CD8-positive, alpha-beta T cell (primary cell): ENCODE measurements at regions of chr9 and their contacts with region 1.

Region 1: GRCh38 chr9:5886114-5886939 is 4.4 kb upstream of the MLANA start:
- DNase-seq: peak; percentile 57 to 87 (median 81)
- ATAC-seq: peak; percentile 96
- H3K4me3 ChIP-seq: no peak overlapping the region
- H3K4me3 Mint-ChIP-seq: no peak overlapping the region
- H3K27ac ChIP-seq: no peak overlapping the region
- H3K27ac Mint-ChIP-seq: no peak overlapping the region
- H3K4me1 ChIP-seq: peaks cover 10% of the 10 kb centered on the region
- H3K4me1 Mint-ChIP-seq: peaks cover 8% of the 10 kb centered on the region
- H3K27me3 ChIP-seq: no peaks in the 10 kb centered on the region
- H3K27me3 Mint-ChIP-seq: no peaks in the 10 kb centered on the region
- CTCF ChIP-seq: peak; percentile 86

Region 2: DNA sequence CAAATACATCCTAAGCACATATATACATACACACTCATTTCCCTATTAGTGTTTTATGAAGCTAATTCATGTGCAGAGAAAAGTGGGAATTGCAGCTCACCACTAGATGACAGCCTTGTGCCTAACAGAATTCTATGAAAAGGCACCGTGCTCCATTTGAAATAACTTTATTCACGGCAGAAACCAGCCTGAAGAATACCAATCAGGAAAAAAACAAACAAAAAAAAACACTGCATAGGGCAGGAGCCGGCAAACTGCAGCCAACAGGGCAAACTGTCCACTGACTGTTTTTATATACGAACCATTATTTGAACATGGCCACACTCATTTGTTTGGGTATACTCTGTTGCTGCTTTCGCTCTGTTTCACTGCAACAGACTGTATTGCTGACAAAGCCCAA is 87.0 kb before region 1 on chr9:
- CTCF ChIA-PET with region 1: interaction called, 9 read pairs
- POLR2A ChIA-PET with region 1: no interaction called
- intact Hi-C with region 1: loop called in 1 of 2 experiments (anchors 1 kb)
- DNase-seq: peak in 2 of 9 experiments; percentile 29 to 46
- ATAC-seq: no peak
- H3K4me3 ChIP-seq: no peak overlapping the region
- H3K4me3 Mint-ChIP-seq: no peak overlapping the region
- H3K27ac ChIP-seq: no peak overlapping the region
- H3K27ac Mint-ChIP-seq: no peak overlapping the region
- H3K4me1 ChIP-seq: peaks cover under 1% of the 10 kb centered on the region
- H3K4me1 Mint-ChIP-seq: peaks cover 28% of the 10 kb centered on the region
- H3K27me3 ChIP-seq: no peaks in the 10 kb centered on the region
- H3K27me3 Mint-ChIP-seq: no peaks in the 10 kb centered on the region
- CTCF ChIP-seq: no peak

Region 3: DNA sequence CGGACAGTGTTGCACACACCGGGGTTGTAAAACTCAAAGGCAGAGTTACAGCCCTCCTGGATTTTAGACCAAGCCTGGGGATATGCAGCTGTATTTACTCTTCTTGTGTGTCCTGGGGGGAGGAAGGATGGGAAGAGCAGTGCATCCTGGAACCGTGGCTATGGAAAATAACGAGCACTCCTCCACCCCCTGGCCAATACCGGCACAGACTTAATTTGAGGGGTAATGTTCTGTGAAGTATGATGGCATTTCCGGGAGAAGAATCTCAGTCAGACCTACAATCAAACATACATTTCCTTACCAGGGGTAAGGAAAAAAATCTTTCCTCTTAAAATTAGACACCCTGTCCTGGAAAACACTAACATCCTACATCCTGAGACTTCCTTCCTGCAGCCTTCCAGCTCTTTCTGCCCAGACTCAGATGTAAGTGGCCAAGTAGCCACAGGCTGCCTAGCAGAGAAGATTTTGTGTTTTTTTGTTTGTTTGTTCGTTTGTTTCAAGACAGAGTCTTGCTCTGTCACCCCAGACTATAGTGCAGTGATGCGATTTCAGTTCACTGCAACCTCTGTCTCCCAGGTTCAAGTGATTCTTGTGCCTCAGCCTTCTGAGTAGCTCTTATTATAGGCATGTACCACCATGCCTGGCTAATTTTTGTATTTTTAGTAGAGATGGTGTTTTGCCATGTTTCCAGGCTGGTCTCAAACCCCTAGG is 42.4 kb before region 1 on chr9:
- CTCF ChIA-PET with region 1: interaction called, 12 read pairs
- POLR2A ChIA-PET with region 1: no interaction called
- intact Hi-C with region 1: no loop called
- DNase-seq: peak in 1 of 9 experiments; percentile 35
- ATAC-seq: no peak
- H3K4me3 ChIP-seq: peak overlapping the region in 1 of 2 experiments; percentile 24
- H3K4me3 Mint-ChIP-seq: peak overlapping the region; percentile 65
- H3K27ac ChIP-seq: peak overlapping the region in 1 of 2 experiments; percentile 61
- H3K27ac Mint-ChIP-seq: peak overlapping the region; percentile 84
- H3K4me1 ChIP-seq: peaks cover 53% of the 10 kb centered on the region
- H3K4me1 Mint-ChIP-seq: peaks cover 63% of the 10 kb centered on the region
- H3K27me3 ChIP-seq: no peaks in the 10 kb centered on the region
- H3K27me3 Mint-ChIP-seq: no peaks in the 10 kb centered on the region
- CTCF ChIP-seq: no peak

Region 4: GRCh38 chr9:5869315-5870019 is 16.9 kb before region 1 on chr9:
- CTCF ChIA-PET with region 1: interaction called, 50 read pairs
- POLR2A ChIA-PET with region 1: no interaction called
- intact Hi-C with region 1: no loop called
- DNase-seq: peak in 2 of 9 experiments; percentile 23 to 30
- ATAC-seq: no peak
- H3K4me3 ChIP-seq: no peak overlapping the region
- H3K4me3 Mint-ChIP-seq: no peak overlapping the region
- H3K27ac ChIP-seq: no peak overlapping the region
- H3K27ac Mint-ChIP-seq: no peak overlapping the region
- H3K4me1 ChIP-seq: no peaks in the 10 kb centered on the region
- H3K4me1 Mint-ChIP-seq: peaks cover 13% of the 10 kb centered on the region
- H3K27me3 ChIP-seq: no peaks in the 10 kb centered on the region
- H3K27me3 Mint-ChIP-seq: no peaks in the 10 kb centered on the region
- CTCF ChIP-seq: no peak

Region 5: DNA sequence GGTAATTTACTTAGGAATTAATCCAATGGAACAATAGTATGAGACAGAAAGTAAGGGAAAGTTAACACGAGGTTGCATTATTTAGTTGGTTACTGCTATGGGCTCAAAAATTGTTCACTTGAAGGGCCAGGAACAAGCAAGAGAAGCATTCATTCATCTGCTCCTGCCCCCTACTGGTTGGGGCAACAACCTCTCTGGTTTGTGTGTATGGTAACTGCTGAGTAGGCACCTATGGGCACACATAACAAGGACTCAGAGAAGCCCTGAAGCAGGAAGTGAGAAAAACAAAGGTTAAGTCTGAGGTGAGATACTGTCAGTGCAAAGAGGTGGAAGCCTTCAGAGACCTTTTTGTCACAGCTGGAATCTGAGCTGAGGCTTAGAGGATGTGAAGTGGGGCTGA is 163.5 kb after region 1 on chr9:
- CTCF ChIA-PET with region 1: interaction called, 63 read pairs
- POLR2A ChIA-PET with region 1: no interaction called
- intact Hi-C with region 1: loop called (anchors 1 kb)
- DNase-seq: peak in 3 of 9 experiments; percentile 12 to 50 (median 36)
- ATAC-seq: peak; percentile 69
- H3K4me3 ChIP-seq: no peak overlapping the region
- H3K4me3 Mint-ChIP-seq: no peak overlapping the region
- H3K27ac ChIP-seq: no peak overlapping the region
- H3K27ac Mint-ChIP-seq: no peak overlapping the region
- H3K4me1 ChIP-seq: no peaks in the 10 kb centered on the region
- H3K4me1 Mint-ChIP-seq: peaks cover 5% of the 10 kb centered on the region
- H3K27me3 ChIP-seq: no peaks in the 10 kb centered on the region
- H3K27me3 Mint-ChIP-seq: peaks cover 11% of the 10 kb centered on the region
- CTCF ChIP-seq: peak; percentile 20

Region 6: DNA sequence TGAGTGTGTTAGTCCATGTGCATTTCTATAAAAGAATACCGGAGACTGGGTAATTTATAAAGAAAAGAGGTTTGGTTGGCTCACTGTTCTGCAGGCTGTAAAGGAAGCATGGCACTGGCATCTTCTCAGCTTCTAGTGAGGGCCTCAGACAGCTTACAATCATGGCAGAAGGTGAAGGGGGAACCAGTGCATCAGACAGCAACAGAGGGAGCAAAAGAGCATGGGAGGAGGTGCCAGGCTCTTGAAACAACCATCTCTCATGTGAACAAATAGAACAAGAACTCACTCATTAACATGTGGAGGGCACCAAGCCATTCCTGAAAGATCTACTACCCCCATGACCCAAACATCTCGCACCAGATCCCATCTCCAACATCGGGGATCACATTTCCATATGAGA is 240.0 kb after region 1 on chr9:
- CTCF ChIA-PET with region 1: no interaction called
- POLR2A ChIA-PET with region 1: no interaction called
- intact Hi-C with region 1: loop called in 1 of 2 experiments (anchors 10 kb)
- DNase-seq: no peak
- ATAC-seq: no peak
- H3K4me3 ChIP-seq: no peak overlapping the region
- H3K4me3 Mint-ChIP-seq: no peak overlapping the region
- H3K27ac ChIP-seq: no peak overlapping the region
- H3K27ac Mint-ChIP-seq: no peak overlapping the region
- H3K4me1 ChIP-seq: no peaks in the 10 kb centered on the region
- H3K4me1 Mint-ChIP-seq: no peaks in the 10 kb centered on the region
- H3K27me3 ChIP-seq: no peaks in the 10 kb centered on the region
- H3K27me3 Mint-ChIP-seq: peaks cover 19% of the 10 kb centered on the region
- CTCF ChIP-seq: no peak

Region 7: GRCh38 chr9:6566409-6567139 is 680.2 kb after region 1 on chr9:
- CTCF ChIA-PET with region 1: interaction called, 3 read pairs
- POLR2A ChIA-PET with region 1: no interaction called
- intact Hi-C with region 1: loop called (anchors 2 to 5 kb)
- DNase-seq: peak in 1 of 9 experiments; percentile 12
- ATAC-seq: no peak
- H3K4me3 ChIP-seq: no peak overlapping the region
- H3K4me3 Mint-ChIP-seq: no peak overlapping the region
- H3K27ac ChIP-seq: no peak overlapping the region
- H3K27ac Mint-ChIP-seq: no peak overlapping the region
- H3K4me1 ChIP-seq: no peaks in the 10 kb centered on the region
- H3K4me1 Mint-ChIP-seq: no peaks in the 10 kb centered on the region
- H3K27me3 ChIP-seq: peaks cover 0 to 2% of the 10 kb centered on the region in 2 experiments
- H3K27me3 Mint-ChIP-seq: no peaks in the 10 kb centered on the region
- CTCF ChIP-seq: no peak